Heart left ventricle (tissue), 16 donors: ENCODE measurements at regions of chr1 and their contacts with region 1.

Region 1: DNA sequence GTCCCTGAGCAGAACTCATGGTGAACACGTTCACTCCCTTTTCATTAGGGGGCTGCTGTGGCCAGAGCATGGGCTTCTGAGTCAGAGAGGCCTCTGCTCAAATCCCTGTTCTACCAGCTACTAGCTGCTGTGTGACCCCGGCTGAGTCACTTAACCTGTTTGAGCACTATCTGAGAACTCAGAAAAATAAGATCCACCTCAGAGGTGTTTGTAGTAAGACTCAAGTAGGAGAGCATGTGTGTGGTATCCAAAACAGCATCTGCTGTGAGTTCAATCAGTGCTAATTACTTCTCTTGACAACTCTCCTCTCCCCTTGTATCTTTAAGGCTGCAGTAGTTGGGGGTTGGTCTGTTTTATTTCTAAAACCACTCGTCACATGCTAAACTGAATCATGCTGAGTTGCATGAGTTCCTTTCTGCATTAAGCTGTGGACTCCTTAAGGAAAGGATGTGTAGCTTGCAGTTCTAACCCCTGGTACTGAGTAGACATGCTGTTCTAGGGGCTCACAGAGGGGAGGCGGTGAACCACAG is 39.7 kb upstream of the JUN start:
- DNase-seq: no peak
- ATAC-seq: no peak
- H3K4me3 ChIP-seq: no peak overlapping the region
- H3K27ac ChIP-seq: peak overlapping the region in 1 of 12 donors; percentile 4
- H3K4me1 ChIP-seq: peaks cover 0 to 25% (median 9%) of the 10 kb centered on the region in 12 donors
- H3K27me3 ChIP-seq: no peaks in the 10 kb centered on the region
- CTCF ChIP-seq: no peak
- POLR2A ChIP-seq: no peak

Region 2: DNA sequence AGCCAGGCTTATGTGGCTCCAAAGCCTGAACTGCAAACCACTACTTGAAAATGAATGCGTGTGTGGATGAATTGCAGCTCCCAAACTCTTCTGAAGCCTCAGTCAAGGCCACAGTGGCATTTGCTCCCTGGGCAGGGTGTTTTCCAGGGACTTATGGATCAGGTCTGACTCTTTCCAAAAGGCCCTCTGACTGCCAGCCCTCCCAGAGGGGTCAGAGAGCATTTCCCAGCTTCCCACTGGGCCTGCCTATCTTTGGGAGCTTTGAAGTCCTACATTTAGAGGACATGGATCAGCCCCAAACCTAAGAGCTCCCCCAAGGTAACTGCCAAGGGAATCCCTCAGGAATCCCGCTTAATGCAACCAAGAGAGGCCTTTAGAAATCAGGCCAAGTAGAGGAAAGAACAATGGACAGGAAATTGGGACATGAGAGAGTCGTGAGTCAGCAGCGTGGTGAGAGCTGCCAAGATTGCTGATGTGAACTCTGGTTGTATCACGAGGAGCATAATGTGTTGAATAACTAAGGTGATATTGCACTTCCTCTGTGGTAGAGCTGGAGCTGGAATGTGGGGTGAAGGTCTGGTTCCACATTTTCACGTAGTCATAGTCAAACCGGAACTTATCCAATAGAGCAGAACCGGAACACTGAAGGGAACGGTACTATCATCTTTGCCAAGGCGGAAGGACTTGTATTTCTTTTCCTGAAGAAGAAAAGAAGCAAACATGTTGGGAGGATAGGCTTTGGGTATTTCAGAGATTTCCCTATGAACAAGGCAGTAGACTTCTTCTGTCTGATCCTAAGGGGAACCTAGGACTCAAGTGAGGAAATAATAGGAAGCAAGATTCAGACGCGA is 59.7 kb after region 1 on chr1:
- intact Hi-C with region 1: loop called in 4 of 10 experiments (anchors 5 kb)
- DNase-seq: peak; percentile 65 to 87 (median 72)
- ATAC-seq: peak; percentile 38 to 85 (median 73)
- H3K4me3 ChIP-seq: no peak overlapping the region
- H3K27ac ChIP-seq: peak overlapping the region; percentile 11 to 85 (median 70)
- H3K4me1 ChIP-seq: peaks cover 5 to 73% (median 43%) of the 10 kb centered on the region in 12 donors
- H3K27me3 ChIP-seq: no peaks in the 10 kb centered on the region
- CTCF ChIP-seq: no peak
- POLR2A ChIP-seq: no peak